MCF 10A (cell line): ENCODE measurements at regions of chr2 and their contacts with region 1.

Region 1: GRCh38 chr2:177212106-177212890 is at the start of gene HNRNPA3:
- DNase-seq: peak; percentile 98
- H3K4me3 Mint-ChIP-seq: peak within 1 kb of the TSS; percentile 91
- H3K27ac Mint-ChIP-seq: peak within 1 kb of the TSS; percentile 100
- H3K4me1 Mint-ChIP-seq: peaks cover 13% of the 10 kb centered on the region
- H3K27me3 Mint-ChIP-seq: no peaks in the 10 kb centered on the region
- CTCF ChIP-seq: no peak
- total RNA-seq, gene HNRNPA3: 142 and 179 TPM in 2 replicates

Region 2: DNA sequence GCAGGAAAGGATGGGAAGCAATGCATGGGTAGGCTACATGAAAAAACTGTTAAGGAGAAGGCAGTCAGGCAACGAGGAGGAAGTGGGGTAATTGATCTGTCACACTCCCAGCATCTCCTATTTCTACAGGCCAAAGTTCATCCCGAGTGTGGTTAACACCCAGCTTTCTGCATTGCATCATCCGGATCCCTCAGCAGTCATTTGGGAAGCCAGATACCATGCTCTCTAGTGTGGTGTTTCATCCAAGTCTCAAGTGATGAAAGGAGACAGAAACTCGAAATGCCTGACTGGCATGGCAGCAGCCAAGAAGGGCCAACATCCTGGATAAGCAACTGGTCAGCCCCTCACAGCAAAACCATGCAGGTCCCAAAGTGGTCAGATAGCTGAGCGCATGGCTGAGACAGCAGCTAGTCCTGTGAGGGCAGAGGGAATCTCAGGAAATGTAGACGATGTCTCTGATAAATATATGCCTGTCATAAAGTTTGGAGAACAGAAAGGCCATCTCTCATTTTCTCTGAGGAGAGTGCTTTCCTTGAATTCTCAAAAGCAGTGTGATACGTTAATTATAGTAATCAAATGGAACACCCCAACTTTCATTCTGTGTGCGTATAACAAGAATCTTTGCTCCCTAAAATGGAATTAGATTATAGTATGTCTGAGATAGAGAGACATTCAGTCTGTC is 24.5 kb before region 1 on chr2:
- CTCF ChIA-PET with region 1: interaction called, 4 read pairs
- POLR2A ChIA-PET with region 1: interaction called, 18 read pairs
- intact Hi-C with region 1: no loop called
- DNase-seq: peak; percentile 32
- H3K4me3 Mint-ChIP-seq: no peak overlapping the region
- H3K27ac Mint-ChIP-seq: peak overlapping the region; percentile 5
- H3K4me1 Mint-ChIP-seq: peaks cover 30% of the 10 kb centered on the region
- H3K27me3 Mint-ChIP-seq: no peaks in the 10 kb centered on the region
- CTCF ChIP-seq: no peak

Region 3: GRCh38 chr2:177201919-177202346 is 10.4 kb before region 1 on chr2:
- CTCF ChIA-PET with region 1: interaction called, 5 read pairs
- POLR2A ChIA-PET with region 1: interaction called, 61 read pairs
- intact Hi-C with region 1: no loop called
- DNase-seq: no peak
- H3K4me3 Mint-ChIP-seq: no peak overlapping the region
- H3K27ac Mint-ChIP-seq: no peak overlapping the region
- H3K4me1 Mint-ChIP-seq: no peaks in the 10 kb centered on the region
- H3K27me3 Mint-ChIP-seq: no peaks in the 10 kb centered on the region
- CTCF ChIP-seq: no peak

Region 4: DNA sequence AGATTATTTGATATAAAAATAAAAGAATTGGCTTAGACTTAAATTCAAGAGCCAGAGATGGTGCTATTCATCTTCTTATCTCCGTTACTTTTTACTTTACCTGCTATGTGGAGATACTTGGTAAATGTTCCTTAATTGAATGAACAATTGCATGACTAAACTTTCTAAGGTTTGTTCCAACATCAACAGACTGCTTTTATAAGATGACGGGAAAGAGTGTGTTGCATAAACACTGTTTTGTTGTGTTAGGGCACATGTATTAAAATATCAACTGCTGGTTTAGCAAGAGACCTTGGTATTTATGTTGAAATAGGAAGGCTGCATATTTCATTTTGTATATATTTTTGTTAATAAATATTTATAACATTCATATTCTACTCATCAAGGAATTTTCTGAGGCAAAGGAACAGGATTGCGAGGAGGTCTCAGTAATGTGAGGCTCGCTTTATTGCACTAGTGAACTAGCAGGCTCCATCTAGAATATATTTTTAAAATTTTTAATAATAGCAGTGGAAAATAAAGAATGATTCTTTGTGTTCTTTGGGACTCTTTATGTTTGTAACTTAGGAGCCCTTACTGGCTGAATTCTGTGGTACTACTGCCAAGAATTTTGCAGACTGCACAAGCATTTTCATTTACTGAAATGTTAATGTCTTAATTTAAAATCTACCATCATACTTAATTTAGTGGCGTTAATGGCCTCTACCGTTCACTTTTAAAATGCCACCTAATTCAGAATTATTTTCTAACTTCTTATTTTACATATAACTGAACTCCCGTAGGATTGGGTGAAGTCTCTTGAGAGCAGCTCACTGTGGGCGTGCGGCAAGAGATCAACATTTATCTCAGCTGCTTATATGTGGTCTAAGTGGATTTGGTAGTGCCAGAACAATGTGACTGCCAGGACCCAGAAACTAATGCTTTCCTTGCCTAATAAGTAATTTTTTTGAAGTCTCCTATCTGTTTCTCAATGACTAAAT is 63.0 kb after region 1 on chr2:
- CTCF ChIA-PET with region 1: no interaction called
- POLR2A ChIA-PET with region 1: interaction called, 22 read pairs
- intact Hi-C with region 1: no loop called
- DNase-seq: peak; percentile 93
- H3K4me3 Mint-ChIP-seq: peak overlapping the region; percentile 62
- H3K27ac Mint-ChIP-seq: peak overlapping the region; percentile 91
- H3K4me1 Mint-ChIP-seq: peaks cover 20% of the 10 kb centered on the region
- H3K27me3 Mint-ChIP-seq: no peaks in the 10 kb centered on the region
- CTCF ChIP-seq: no peak